Activated CD8-positive, alpha-beta T cell treated with anti-CD3 and anti-CD28 coated beads, Interleukin-2, amount 10 ng/mL, durations not matched to agents 7 days and 5 days (primary cell): ENCODE measurements at regions of chr1 and their contacts with region 1.

Region 1: GRCh38 chr1:42846257-42847110 is at the start of gene ZNF691:
- DNase-seq: peak; percentile 94
- ATAC-seq: peak; percentile 99
- H3K4me3 Mint-ChIP-seq: peak within 1 kb of the TSS; percentile 87
- H3K27ac Mint-ChIP-seq: peak within 1 kb of the TSS; percentile 80
- H3K4me1 Mint-ChIP-seq: peaks cover 30% of the 10 kb centered on the region
- H3K27me3 Mint-ChIP-seq: no peaks in the 10 kb centered on the region
- total RNA-seq, gene ZNF691: 8.0 to 8.9 TPM

Region 2: DNA sequence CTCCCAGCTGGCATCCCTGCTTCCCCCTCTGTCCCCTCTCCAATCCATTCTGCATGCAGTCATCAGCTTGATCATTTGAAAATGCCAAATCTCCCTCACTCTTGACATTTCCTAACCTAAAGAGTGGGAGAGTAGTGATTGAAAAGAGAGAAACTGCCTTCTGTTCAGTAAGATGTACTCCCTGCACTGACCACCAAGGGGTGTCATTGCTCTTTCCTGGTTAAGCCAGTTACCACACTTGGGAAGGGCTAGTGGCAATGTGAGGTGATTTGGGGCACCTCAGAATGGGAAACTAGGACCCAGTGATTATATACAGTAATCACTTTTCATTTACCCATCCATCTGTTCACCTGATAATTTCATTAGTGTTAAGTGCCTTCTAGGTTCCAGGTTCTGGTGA is 68.6 kb before region 1 on chr1:
- CTCF ChIA-PET with region 1: interaction called, 12 read pairs
- POLR2A ChIA-PET with region 1: no interaction called
- DNase-seq: peak; percentile 44
- ATAC-seq: peak; percentile 47
- H3K4me3 Mint-ChIP-seq: no peak overlapping the region
- H3K27ac Mint-ChIP-seq: peak overlapping the region; percentile 53
- H3K4me1 Mint-ChIP-seq: peaks cover 36% of the 10 kb centered on the region
- H3K27me3 Mint-ChIP-seq: no peaks in the 10 kb centered on the region

Region 3: GRCh38 chr1:42816585-42817434 is 29.7 kb before region 1 on chr1 and contains the starts of genes ERMAP and SVBP:
- CTCF ChIA-PET with region 1: interaction called, 21 read pairs
- POLR2A ChIA-PET with region 1: interaction called, 13 read pairs
- DNase-seq: peak; percentile 94
- ATAC-seq: peak; percentile 92
- H3K4me3 Mint-ChIP-seq: peak within 1 kb of the TSS; percentile 86
- H3K27ac Mint-ChIP-seq: peak within 1 kb of the TSS; percentile 83
- H3K4me1 Mint-ChIP-seq: peaks cover 23% of the 10 kb centered on the region
- H3K27me3 Mint-ChIP-seq: no peaks in the 10 kb centered on the region
- total RNA-seq, gene ERMAP: 5.7 to 6.0 TPM
- total RNA-seq, gene SVBP: 17.1 to 18.0 TPM